Transverse colon (tissue), 4 donors: ENCODE measurements at regions of chr7 and their contacts with region 1.

Region 1: DNA sequence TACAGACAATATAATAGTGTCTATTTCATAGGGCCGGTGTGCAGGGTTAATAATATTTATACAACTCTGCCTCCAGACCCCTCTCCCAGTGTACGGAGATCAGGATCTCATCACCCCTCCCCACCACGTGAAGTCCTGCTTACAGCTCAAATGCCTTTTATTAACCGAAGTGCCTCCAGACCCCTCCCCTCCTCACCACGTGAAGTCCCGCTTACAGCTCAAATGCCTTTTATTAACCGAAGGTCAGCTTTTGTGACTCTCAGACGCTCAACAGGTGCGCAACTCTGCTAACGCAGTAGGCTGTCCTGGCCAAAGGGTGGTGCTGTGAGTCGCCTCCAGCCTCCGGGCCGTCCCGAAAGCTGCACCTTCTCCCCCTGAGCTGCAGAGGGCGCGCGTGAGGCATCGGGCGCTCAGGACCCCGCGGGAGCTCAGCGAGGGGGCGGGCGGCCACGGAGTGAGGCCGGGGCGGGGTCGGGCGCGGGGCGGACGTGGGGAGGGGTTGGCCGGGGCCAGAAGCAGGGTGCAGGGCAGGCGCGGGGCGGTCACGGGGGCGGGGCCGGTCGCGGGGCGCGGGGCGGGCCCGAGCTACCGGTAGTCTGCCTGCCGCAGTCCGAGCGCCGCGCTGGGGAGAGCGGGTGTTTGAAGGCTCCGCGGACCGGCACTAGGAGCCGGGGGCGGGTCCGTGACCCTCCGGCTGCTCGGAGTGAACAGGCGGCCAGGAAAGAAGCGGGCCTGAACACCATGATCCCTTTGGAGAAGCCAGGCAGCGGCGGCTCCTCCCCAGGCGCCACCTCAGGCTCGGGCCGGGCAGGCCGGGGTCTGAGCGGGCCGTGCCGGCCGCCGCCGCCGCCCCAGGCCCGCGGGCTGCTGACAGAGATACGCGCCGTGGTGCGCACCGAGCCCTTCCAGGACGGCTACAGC is at the start of gene STK17A:
- DNase-seq: peak; percentile 95
- H3K4me3 ChIP-seq: peak within 1 kb of the TSS; percentile 61 to 99 (median 74)
- H3K27ac ChIP-seq: peak within 1 kb of the TSS; percentile 91 to 99 (median 94)
- H3K4me1 ChIP-seq: peaks cover 9 to 39% (median 29%) of the 10 kb centered on the region in 4 donors
- H3K27me3 ChIP-seq: peaks cover 10% of the 10 kb centered on the region
- CTCF ChIP-seq: peak; percentile 99 to 100 (median 100)
- EP300 ChIP-seq: no peak
- POLR2A ChIP-seq: peak; percentile 85
- total RNA-seq, gene STK17A: 6.0 to 35.7 (median 26.4) TPM

Region 2: DNA sequence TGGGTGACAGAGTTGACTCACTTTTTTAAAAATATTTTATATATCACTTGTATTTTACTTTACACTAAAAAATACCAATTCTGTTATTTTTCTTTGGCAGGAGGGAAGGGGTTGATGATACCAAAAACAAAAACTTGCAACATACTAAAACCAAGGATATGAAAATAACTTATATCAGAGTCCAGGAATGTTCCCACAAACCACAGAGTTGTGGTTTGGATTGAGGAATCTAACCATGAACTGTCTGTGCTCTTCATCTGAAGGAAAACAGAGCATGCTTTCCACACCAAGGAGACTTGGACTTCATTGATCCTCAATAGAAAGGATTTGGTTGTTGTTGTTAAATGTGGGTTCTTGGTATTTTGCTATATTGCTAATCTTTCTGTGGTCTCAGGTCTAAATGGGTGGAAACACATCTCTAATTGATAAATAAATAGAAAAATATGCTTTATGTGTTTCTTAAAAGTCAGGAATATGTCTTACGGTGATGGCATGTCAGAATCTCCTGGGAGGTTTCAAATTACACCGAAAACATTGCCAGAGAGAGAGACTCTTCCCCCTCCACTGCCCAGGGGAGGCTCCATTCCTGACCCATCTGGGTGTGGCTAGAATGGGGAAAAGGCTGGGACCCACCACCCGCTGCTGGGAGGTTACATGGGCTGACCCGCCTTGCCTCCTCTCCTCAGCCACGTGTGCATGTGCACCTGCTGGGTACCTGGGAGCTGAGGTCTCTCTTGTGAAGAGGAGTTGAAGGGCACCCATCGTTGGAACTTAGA is 46.8 kb before region 1 on chr7:
- in situ Hi-C with region 1: no loop called
- intact Hi-C with region 1: no loop called
- DNase-seq: no peak
- H3K4me3 ChIP-seq: no peak overlapping the region
- H3K27ac ChIP-seq: no peak overlapping the region
- H3K4me1 ChIP-seq: no peaks in the 10 kb centered on the region
- H3K27me3 ChIP-seq: no peaks in the 10 kb centered on the region
- CTCF ChIP-seq: no peak
- EP300 ChIP-seq: no peak
- POLR2A ChIP-seq: no peak

Region 3: DNA sequence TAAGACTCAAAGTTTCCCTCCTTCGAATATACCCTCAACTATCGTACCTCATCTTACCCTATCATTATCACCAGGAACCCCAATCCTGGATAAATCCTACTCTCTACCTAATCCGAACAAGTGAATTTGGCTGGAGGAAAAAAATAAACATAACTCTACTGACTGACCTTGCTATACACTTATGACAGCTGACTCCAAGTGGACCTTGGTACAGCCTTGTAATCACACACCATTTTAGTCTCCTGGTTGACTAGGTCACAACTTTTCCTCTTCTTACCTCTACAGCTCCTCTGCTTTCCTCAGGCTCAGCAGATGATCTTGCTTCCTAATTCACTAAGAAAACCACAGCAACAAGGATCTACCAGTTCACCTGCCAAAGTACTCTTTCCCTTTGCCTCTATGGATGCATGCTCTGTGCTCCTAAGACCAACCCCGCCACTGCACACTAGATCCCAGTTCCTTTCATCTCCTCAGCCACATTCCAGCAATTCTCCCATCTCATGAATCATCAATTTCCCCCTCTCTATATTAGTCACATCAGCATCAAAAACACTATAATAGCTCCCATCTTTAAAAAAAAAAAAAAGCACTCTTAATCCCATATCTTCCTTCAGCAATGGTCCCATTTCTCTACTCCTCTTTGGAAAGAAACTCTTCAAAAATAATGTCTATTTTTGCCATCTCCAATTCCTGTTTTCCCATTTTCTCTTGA is 111.1 kb after region 1 on chr7:
- in situ Hi-C with region 1: loop called in 3 of 4 experiments (anchors 5 to 10 kb)
- intact Hi-C with region 1: no loop called
- DNase-seq: no peak
- H3K4me3 ChIP-seq: no peak overlapping the region
- H3K27ac ChIP-seq: no peak overlapping the region
- H3K4me1 ChIP-seq: peaks cover 0 to 8% (median 0%) of the 10 kb centered on the region in 4 donors
- H3K27me3 ChIP-seq: no peaks in the 10 kb centered on the region
- CTCF ChIP-seq: no peak
- EP300 ChIP-seq: no peak
- POLR2A ChIP-seq: no peak

Region 4: DNA sequence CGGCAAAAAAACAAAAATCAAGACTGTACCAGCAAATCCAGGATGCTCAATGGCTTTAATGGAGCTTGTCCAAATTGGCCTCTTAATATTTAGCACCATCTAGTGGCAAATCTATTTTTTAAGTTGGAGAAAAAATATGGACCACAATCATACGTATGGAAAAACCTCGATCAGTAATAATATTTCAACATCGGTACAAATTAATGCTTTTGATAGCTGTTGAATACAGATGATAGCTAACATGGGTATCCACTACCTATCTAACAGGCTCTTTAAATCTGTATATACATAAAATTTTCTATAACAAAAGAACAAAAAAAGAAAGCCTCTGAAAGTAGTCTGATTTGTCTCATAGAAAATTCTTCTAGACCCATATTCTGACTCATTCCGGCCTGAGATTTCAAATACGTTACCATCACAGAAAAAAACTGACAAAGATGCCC is 117.3 kb after region 1 on chr7:
- in situ Hi-C with region 1: loop called (anchors 5 to 10 kb)
- intact Hi-C with region 1: loop called (anchors 2 kb)
- DNase-seq: no peak
- H3K4me3 ChIP-seq: no peak overlapping the region
- H3K27ac ChIP-seq: no peak overlapping the region
- H3K4me1 ChIP-seq: peaks cover 0 to 9% (median 0%) of the 10 kb centered on the region in 4 donors
- H3K27me3 ChIP-seq: no peaks in the 10 kb centered on the region
- CTCF ChIP-seq: peak; percentile 63 to 82 (median 70)
- EP300 ChIP-seq: no peak
- POLR2A ChIP-seq: no peak

Region 5: DNA sequence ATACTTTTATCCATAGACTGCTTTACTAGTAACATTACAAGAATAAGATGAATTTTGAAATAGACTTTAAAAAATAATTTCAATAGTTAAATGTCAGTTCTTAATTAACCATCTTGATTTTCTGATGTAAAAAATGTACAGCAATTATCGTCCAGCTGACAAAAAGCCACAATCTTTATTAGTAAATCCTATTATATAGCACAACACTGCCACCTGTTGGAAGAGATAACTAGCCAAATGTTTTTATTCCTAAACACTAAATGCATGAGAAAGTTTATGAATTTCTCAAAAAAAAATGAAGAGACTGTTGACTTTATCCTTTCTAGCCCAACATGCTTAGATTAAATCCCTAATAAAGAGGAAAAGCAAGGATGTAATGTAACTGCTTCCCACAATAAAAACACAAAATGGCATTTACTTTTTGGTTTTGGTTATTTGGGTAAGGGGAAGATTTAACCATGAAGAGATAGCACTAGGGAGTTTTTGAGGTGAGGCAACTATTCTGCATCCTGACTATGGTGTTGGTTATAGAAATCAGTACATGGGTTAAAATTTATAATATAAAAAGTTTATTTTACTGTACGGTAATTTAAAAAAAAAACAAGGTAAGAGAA is 138.5 kb after region 1 on chr7:
- in situ Hi-C with region 1: no loop called
- intact Hi-C with region 1: loop called (anchors 5 kb)
- DNase-seq: no peak
- H3K4me3 ChIP-seq: no peak overlapping the region
- H3K27ac ChIP-seq: no peak overlapping the region
- H3K4me1 ChIP-seq: peaks cover 0 to 16% (median 3%) of the 10 kb centered on the region in 4 donors
- H3K27me3 ChIP-seq: no peaks in the 10 kb centered on the region
- CTCF ChIP-seq: peak; percentile 62 to 72 (median 66)
- EP300 ChIP-seq: no peak
- POLR2A ChIP-seq: no peak

Region 6: GRCh38 chr7:44408596-44408995 is 825.8 kb after region 1 on chr7:
- in situ Hi-C with region 1: no loop called
- intact Hi-C with region 1: loop called (anchors 5 kb)
- DNase-seq: no peak
- H3K4me3 ChIP-seq: no peak overlapping the region
- H3K27ac ChIP-seq: no peak overlapping the region
- H3K4me1 ChIP-seq: peaks cover 0 to 3% (median 0%) of the 10 kb centered on the region in 4 donors
- H3K27me3 ChIP-seq: no peaks in the 10 kb centered on the region
- CTCF ChIP-seq: no peak
- EP300 ChIP-seq: no peak
- POLR2A ChIP-seq: no peak